Dorsolateral prefrontal cortex (tissue), 120 donors: ENCODE measurements at regions of chr1 and their contacts with region 1.

Region 1: GRCh38 chr1:156456622-156457465 is 43.7 kb downstream of the MEF2D start:
- DNase-seq: peak; percentile 89 to 98 (median 96)
- H3K4me3 ChIP-seq: peak overlapping the region; percentile 50 to 96 (median 72)
- H3K27ac ChIP-seq: peak overlapping the region; percentile 91 to 100 (median 100)
- H3K27me3 ChIP-seq: no peaks in the 10 kb centered on the region
- CTCF ChIP-seq: peak in 18 of 56 donors; percentile 1 to 50 (median 7)

Region 2: DNA sequence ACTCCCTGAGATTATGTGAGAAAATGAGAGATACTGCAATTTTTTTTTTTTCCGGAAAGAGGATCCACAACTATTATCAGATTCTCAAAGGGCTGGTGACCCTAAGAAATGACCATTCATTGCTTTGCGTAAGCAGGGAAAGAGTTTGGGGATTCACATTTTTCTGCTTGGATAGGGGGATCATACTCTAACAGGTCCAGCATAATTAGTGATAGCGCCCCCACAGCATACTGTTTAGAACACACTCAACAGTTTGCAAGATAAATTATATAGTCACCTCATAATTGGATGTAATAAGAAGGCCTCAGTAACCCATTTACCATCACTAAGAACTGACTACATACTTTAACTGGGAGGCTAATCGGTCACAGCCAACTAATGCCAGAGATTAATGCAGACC is 120.6 kb before region 1 on chr1:
- intact Hi-C with region 1: no loop called
- DNase-seq: no peak
- H3K4me3 ChIP-seq: peak overlapping the region in 43 of 59 donors; percentile 20 to 100 (median 88)
- H3K27ac ChIP-seq: no peak overlapping the region
- H3K27me3 ChIP-seq: no peaks in the 10 kb centered on the region
- CTCF ChIP-seq: no peak

Region 3: GRCh38 chr1:156500797-156501499 is 44.1 kb after region 1 on chr1:
- intact Hi-C with region 1: loop called (anchors 1 kb)
- DNase-seq: peak; percentile 87 to 97 (median 94)
- H3K4me3 ChIP-seq: peak overlapping the region; percentile 75 to 100 (median 98)
- H3K27ac ChIP-seq: peak overlapping the region; percentile 97 to 100 (median 100)
- H3K27me3 ChIP-seq: no peaks in the 10 kb centered on the region
- CTCF ChIP-seq: peak in 54 of 56 donors; percentile 29 to 77 (median 58)

Region 4: DNA sequence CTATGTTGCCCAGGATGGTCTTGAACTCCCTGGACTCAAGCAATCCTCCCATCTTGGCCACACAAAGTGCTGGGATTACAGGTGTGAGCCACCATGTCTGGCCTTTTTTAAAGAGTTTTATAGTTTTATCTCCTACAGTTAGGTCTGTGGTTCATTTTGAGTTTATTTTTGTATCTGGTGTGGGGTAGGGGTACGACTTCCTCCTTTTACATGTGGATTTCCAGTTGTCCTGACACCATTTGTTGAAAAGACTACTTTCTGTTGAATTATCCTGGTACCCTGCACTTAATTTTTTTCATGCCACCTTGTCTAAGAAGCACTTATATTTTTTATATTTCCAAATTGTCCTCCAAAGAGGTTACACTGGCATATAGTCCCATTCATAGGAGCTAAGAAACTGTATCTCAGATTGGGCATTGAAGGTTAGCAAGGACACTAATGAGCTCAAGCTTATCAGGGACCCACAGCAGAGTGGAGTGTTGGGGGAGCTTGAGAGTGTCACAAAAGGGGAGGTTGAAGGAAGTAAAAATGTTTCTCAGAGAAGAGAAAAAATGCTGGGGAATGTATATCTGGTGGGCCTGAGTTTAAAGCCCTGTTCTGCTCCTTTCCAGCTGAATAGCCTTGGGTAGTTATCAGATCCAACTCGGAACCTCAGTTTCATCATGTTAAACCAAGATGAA is 67.1 kb after region 1 on chr1:
- intact Hi-C with region 1: no loop called
- DNase-seq: no peak
- H3K4me3 ChIP-seq: no peak overlapping the region
- H3K27ac ChIP-seq: no peak overlapping the region
- H3K27me3 ChIP-seq: no peaks in the 10 kb centered on the region
- CTCF ChIP-seq: no peak

Region 5: DNA sequence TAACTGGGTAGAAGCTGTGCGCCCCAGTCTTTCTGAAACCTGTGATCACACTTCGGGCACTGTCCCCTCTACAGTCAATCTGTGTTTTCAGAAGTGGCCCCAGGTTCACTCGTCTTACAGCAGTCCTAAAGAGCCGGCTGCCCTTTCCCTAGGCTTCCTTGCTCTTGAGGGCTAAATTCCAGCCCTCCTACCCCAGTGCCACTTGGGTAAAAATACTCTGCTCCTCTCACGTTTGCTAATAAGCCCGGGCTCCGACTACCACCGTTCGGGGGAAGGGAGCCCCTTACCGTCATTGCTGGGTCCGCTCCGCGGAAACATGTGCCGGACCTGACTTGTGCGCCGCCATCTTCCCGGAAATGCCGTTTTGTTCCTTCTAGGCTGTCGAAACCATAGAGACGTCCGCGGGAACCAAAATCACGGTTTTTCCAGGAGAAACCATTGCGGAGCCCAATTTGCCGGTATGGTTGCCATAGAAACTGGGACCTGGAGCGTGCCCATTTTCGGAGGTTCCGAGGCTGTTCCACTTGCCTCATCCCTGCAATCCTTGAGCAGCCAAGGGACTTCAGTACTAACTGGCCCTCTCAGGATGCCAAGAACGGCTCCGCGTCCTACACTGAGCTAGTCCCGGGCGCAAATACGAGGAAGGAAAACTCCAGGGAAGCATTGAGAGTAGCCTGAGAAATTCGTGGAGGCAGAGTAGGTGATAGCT is 144.4 kb after region 1 on chr1 and contains the start of gene GPATCH4:
- intact Hi-C with region 1: loop called (anchors 5 kb)
- DNase-seq: peak; percentile 64 to 92 (median 86)
- H3K4me3 ChIP-seq: peak within 1 kb of the TSS; percentile 58 to 95 (median 76)
- H3K27ac ChIP-seq: peak within 1 kb of the TSS in 58 of 59 donors; percentile 26 to 91 (median 82)
- H3K27me3 ChIP-seq: no peaks in the 10 kb centered on the region
- CTCF ChIP-seq: peak in 34 of 56 donors; percentile 7 to 55 (median 29)
- total RNA-seq, gene GPATCH4: 15.8 to 40.9 (median 28.2) TPM

Region 6: GRCh38 chr1:156608036-156608674 is 151.3 kb after region 1 on chr1:
- intact Hi-C with region 1: loop called (anchors 5 kb)
- DNase-seq: peak in 5 of 10 donors; percentile 42 to 74 (median 64)
- H3K4me3 ChIP-seq: peak overlapping the region in 11 of 59 donors; percentile 3 to 38 (median 12)
- H3K27ac ChIP-seq: peak overlapping the region in 57 of 59 donors; percentile 22 to 93 (median 85)
- H3K27me3 ChIP-seq: no peaks in the 10 kb centered on the region
- CTCF ChIP-seq: peak; percentile 58 to 95 (median 81)

Region 7: DNA sequence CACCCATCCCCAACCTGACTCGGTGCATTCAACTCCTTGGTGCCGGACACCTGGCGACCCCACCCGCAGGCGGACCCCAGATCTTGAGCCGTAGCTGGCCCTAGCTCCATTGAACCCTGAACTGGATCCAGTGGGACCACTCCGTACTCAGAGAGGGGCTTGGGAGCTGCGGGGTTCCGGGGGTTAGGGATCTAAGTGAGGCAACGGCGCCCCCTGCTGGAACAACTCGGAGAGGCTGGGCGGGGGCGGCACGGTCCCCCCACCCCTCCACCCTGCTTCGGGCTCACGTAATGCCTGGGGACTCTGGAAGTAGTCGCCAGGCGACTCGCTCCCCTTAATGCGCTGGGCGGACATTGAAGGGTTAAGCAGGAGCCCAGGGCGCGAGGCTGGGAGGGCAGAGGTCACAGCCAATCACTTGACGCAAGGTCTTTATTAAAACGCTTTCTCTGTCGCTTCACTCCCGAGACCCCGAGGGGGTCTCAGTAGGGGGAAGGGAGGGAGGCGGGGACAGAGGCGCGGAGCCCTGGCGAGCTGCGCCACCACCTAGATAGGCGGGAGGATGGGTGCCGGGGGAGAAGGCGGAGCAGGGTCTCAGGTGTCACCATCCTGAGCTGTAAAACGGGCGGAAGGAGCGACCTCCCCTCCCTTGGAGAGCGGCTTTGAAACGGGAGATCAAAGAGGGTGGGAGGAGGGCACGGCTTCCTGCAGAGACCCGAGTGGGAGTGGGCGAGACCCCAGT is 249.2 kb after region 1 on chr1:
- intact Hi-C with region 1: no loop called
- DNase-seq: peak in 9 of 10 donors; percentile 36 to 76 (median 64)
- H3K4me3 ChIP-seq: peak overlapping the region; percentile 31 to 74 (median 59)
- H3K27ac ChIP-seq: peak overlapping the region in 54 of 59 donors; percentile 51 to 90 (median 75)
- H3K27me3 ChIP-seq: peaks cover 0 to 17% (median 0%) of the 10 kb centered on the region in 45 donors
- CTCF ChIP-seq: peak; percentile 48 to 89 (median 78)